Pancreas (tissue), 10 donors: ENCODE measurements at regions of chr21 and their contacts with region 1.

Region 1: DNA sequence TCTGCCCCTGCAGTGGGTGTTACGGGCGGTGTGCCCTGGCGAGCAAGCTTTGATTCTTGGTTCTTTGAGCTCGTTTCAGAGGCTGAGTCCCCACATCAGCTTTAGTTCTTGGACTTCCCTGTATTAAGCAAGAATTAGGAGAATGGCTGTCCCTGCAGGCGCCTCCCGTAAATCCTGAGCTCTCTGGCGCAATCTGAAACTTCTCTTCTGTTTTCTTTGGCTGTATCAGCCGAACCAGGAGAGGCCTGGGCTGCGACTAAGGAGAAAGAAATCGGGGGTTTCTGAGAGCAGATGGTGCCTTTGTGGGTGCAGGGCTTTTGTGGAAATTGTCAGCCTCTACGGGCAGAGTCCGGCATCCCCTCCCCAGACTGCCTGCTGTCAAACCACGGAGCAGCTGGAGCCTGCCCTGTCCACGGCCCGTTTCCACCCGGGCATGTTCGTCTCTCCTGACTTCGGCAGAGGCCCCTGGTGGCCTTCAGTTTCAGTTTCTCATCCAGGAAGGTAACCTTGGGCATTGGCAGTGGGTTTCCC is 17.9 kb downstream of the CSTB start:
- DNase-seq: no peak
- ATAC-seq: peak; percentile 14 to 45 (median 34)
- H3K4me3 ChIP-seq: no peak overlapping the region
- H3K27ac ChIP-seq: peak overlapping the region; percentile 1 to 71 (median 44)
- H3K4me1 ChIP-seq: peaks cover 0 to 10% (median 0%) of the 10 kb centered on the region in 3 donors
- H3K27me3 ChIP-seq: no peaks in the 10 kb centered on the region
- CTCF ChIP-seq: no peak

Region 2: GRCh38 chr21:43333298-43334062 is 424.7 kb before region 1 on chr21:
- intact Hi-C with region 1: no loop called
- DNase-seq: peak in 4 of 6 donors; percentile 41 to 72 (median 48)
- ATAC-seq: peak; percentile 68 to 80 (median 71)
- H3K4me3 ChIP-seq: no peak overlapping the region
- H3K27ac ChIP-seq: peak overlapping the region; percentile 33 to 76 (median 49)
- H3K4me1 ChIP-seq: peaks cover 0 to 3% (median 0%) of the 10 kb centered on the region in 3 donors
- H3K27me3 ChIP-seq: no peaks in the 10 kb centered on the region
- CTCF ChIP-seq: no peak

Region 3: GRCh38 chr21:43697758-43698643 is 60.2 kb before region 1 on chr21:
- intact Hi-C with region 1: loop called in 1 of 3 experiments (anchors 10 kb)
- DNase-seq: peak in 1 of 6 donors; percentile 21
- ATAC-seq: no peak
- H3K4me3 ChIP-seq: no peak overlapping the region
- H3K27ac ChIP-seq: no peak overlapping the region
- H3K4me1 ChIP-seq: peaks cover 0 to 6% (median 3%) of the 10 kb centered on the region in 3 donors
- H3K27me3 ChIP-seq: no peaks in the 10 kb centered on the region
- CTCF ChIP-seq: no peak